ENCODE measurements at regions of chr1 and their contacts with region 1.

Region 1: GRCh38 chr1:12486401-12487005 is 131.5 kb downstream of the DHRS3 start:
- DNase-seq: no peak
- H3K4me3 ChIP-seq: no peak overlapping the region
- H3K27ac ChIP-seq: no peak overlapping the region
- H3K4me1 ChIP-seq: peaks cover 27% of the 10 kb centered on the region
- H3K27me3 ChIP-seq: no peaks in the 10 kb centered on the region
- CTCF ChIP-seq: no peak

Region 2: GRCh38 chr1:12448746-12449177 is 37.7 kb before region 1 on chr1:
- CTCF ChIA-PET with region 1: no interaction called
- dilution Hi-C with region 1: no loop called
- in situ Hi-C with region 1: no loop called
- intact Hi-C with region 1: no loop called
- DNase-seq: no peak
- H3K4me3 ChIP-seq: no peak overlapping the region
- H3K27ac ChIP-seq: no peak overlapping the region
- H3K4me1 ChIP-seq: peaks cover 28% of the 10 kb centered on the region
- H3K27me3 ChIP-seq: no peaks in the 10 kb centered on the region
- CTCF ChIP-seq: no peak

Region 3: GRCh38 chr1:12472798-12473551 is 13.5 kb before region 1 on chr1:
- CTCF ChIA-PET with region 1: no interaction called
- dilution Hi-C with region 1: no loop called
- in situ Hi-C with region 1: no loop called
- intact Hi-C with region 1: loop called (anchors 1 kb)
- DNase-seq: no peak
- H3K4me3 ChIP-seq: no peak overlapping the region
- H3K27ac ChIP-seq: no peak overlapping the region
- H3K4me1 ChIP-seq: peaks cover 23% of the 10 kb centered on the region
- H3K27me3 ChIP-seq: no peaks in the 10 kb centered on the region
- CTCF ChIP-seq: no peak

Region 4: DNA sequence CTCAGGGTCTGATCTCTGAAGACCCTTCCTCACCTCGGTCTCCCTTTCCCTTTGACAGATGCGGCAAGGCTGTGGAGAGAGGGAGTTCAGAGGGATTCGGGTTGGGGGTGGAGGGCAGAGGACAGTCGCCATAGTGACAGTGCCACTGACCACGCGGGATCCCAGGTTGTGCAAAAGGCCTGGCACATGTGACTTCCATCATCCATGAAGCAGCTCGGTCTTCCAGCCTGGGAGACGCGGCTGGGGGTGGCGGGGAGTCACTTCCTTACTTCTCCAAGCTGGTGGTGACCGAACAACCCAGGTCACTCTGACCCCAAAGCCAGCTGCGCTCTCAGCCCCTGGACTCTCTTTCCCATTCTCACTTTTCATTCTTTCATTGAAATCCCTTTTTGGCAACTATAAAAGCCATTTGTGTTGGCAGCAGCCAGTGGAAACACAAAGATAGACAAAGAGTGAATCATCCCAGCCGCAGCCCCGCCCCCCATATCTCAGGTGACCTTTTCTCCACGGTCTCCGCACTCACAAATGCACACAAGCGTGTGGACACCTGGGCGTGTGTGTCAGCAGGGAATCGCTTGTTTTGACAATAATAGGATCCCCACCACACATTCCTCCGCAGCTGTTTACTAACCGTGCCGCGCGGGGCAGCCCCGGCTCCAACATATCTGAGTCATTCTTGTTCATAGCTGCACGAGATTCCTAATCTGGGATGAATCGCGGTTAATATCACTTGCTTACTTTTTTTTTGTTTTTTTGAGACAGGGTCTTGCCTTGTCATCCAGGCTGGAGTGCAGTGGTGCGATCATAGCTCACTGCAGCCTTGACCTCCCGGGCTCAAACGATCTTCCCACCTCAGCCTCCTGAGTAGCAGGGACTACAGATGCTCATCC is 63.2 kb after region 1 on chr1:
- CTCF ChIA-PET with region 1: no interaction called
- dilution Hi-C with region 1: no loop called
- in situ Hi-C with region 1: no loop called
- intact Hi-C with region 1: loop called (anchors 5 kb)
- DNase-seq: peak; percentile 97
- H3K4me3 ChIP-seq: peak overlapping the region in 1 of 3 experiments; percentile 8
- H3K27ac ChIP-seq: peak overlapping the region; percentile 47
- H3K4me1 ChIP-seq: peaks cover 15% of the 10 kb centered on the region
- H3K27me3 ChIP-seq: peaks cover 7% of the 10 kb centered on the region
- CTCF ChIP-seq: no peak

Region 5: GRCh38 chr1:12851781-12852181 is 365.3 kb after region 1 on chr1:
- CTCF ChIA-PET with region 1: no interaction called
- dilution Hi-C with region 1: no loop called
- in situ Hi-C with region 1: no loop called
- intact Hi-C with region 1: no loop called
- DNase-seq: peak; percentile 5
- H3K4me3 ChIP-seq: no peak overlapping the region
- H3K27ac ChIP-seq: no peak overlapping the region
- H3K4me1 ChIP-seq: no peaks in the 10 kb centered on the region
- H3K27me3 ChIP-seq: no peaks in the 10 kb centered on the region
- CTCF ChIP-seq: no peak